PC-3 (cell line): ENCODE measurements at regions of chr15 and their contacts with region 1.

Region 1: DNA sequence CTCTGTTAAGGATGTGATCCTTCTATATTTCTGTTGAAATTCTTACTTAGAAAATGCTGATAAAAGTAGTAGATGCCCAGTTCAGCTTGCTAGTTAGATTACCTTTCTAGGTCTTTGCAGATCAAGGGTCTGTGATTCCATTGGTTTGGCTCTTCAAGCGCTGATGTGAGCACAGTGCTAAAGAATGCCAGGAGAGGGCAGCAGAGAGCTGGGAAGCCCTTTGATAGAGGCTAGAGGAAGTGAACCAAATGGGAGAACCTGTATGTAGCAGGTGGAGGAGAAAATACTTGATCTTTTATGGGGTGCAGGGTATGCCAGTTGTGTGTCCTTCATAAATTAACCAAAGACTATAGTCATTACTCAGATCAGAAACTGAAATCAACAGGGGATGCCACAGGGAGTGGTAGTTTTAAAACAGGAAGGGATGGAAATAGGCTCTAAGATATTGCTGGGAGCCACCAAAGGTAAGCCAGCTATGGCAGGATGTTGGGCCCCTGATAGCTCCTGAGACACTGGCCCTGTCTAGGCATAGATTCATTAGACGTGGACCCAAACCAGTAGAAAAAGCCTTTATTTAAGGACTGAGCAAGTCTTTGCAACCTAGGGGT is 677.4 kb downstream of the SQOR start:
- DNase-seq: peak; percentile 81
- ATAC-seq: peak; percentile 92
- H3K4me3 ChIP-seq: no peak overlapping the region
- H3K27ac ChIP-seq: no peak overlapping the region
- H3K4me1 ChIP-seq: no peaks in the 10 kb centered on the region
- H3K27me3 ChIP-seq: no peaks in the 10 kb centered on the region
- CTCF ChIP-seq: peak; percentile 85

Region 2: GRCh38 chr15:46502668-46503067 is 190.4 kb after region 1 on chr15:
- CTCF ChIA-PET with region 1: no interaction called
- POLR2A ChIA-PET with region 1: no interaction called
- intact Hi-C with region 1: loop called (anchors 1 kb)
- DNase-seq: peak; percentile 39
- ATAC-seq: no peak
- H3K4me3 ChIP-seq: no peak overlapping the region
- H3K27ac ChIP-seq: no peak overlapping the region
- H3K4me1 ChIP-seq: no peaks in the 10 kb centered on the region
- H3K27me3 ChIP-seq: no peaks in the 10 kb centered on the region
- CTCF ChIP-seq: peak; percentile 50